ENCODE measurements at regions of chr20 and their contacts with region 1.

Region 1: GRCh38 chr20:54649511-54649962 is 174.1 kb downstream of the DOK5 start:
- DNase-seq: peak; percentile 72
- H3K4me3 ChIP-seq: no peak overlapping the region
- H3K27ac ChIP-seq: no peak overlapping the region
- H3K4me1 ChIP-seq: no peaks in the 10 kb centered on the region
- H3K27me3 ChIP-seq: peaks cover 0 to 3% of the 10 kb centered on the region in 2 experiments
- CTCF ChIP-seq: peak; percentile 78 to 82
- POLR2A ChIP-seq: no peak

Region 2: GRCh38 chr20:54093423-54094267 is 555.9 kb before region 1 on chr20:
- CTCF ChIA-PET with region 1: interaction called, 18 read pairs
- POLR2A ChIA-PET with region 1: no interaction called
- dilution Hi-C with region 1: no loop called
- intact Hi-C with region 1: loop called (anchors 1 kb)
- DNase-seq: no peak
- H3K4me3 ChIP-seq: no peak overlapping the region
- H3K27ac ChIP-seq: no peak overlapping the region
- H3K4me1 ChIP-seq: no peaks in the 10 kb centered on the region
- H3K27me3 ChIP-seq: no peaks in the 10 kb centered on the region
- CTCF ChIP-seq: no peak
- POLR2A ChIP-seq: no peak

Region 3: GRCh38 chr20:54219751-54220426 is 429.6 kb before region 1 on chr20:
- CTCF ChIA-PET with region 1: interaction called, 38 read pairs
- POLR2A ChIA-PET with region 1: no interaction called
- dilution Hi-C with region 1: no loop called
- intact Hi-C with region 1: loop called (anchors 1 kb)
- DNase-seq: peak; percentile 56
- H3K4me3 ChIP-seq: no peak overlapping the region
- H3K27ac ChIP-seq: no peak overlapping the region
- H3K4me1 ChIP-seq: peaks cover 11% of the 10 kb centered on the region
- H3K27me3 ChIP-seq: no peaks in the 10 kb centered on the region
- CTCF ChIP-seq: peak; percentile 30 to 33
- POLR2A ChIP-seq: no peak

Region 4: DNA sequence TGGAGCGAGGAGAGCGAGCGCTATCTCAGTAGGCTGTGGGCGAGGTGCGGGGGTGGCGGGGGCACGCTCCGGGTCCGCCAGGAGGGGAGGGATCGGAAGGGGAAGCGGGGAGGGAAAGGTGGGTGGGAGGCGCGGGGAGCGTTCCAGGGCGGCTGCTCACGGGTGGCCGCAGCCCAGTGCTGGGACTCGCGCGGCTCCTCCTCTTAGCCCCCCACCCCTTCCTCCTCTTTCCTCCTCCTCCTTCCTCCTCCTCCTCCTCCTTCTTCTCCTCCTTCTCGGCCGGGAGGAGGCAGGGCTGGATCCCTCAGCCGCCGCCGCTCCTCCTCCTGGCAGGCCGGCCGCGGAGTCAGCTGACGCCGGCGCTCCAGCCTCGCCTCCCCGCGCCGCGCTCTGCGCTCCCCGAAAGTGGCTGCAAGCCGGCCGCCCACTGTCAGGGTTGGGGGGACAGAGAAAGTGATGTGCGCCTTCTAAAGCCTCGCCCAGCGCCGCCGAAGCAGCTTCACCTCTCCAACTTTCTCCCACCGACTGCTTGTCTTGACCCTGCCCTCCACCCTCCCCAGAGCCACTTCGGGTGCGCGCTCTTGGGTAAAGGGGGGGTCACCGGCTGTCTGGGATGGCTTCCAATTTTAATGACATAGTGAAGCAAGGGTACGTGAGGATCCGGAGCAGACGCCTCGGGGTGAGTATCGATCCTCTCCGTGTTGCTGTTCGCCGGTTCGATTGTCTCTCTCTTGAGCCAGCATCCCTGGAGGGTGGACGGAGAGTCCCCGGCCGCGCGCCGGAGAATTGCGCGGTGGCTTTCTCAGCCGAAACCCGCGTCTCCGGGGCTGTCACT is 174.0 kb before region 1 on chr20 and contains the start of gene DOK5:
- CTCF ChIA-PET with region 1: no interaction called
- POLR2A ChIA-PET with region 1: no interaction called
- dilution Hi-C with region 1: no loop called
- intact Hi-C with region 1: loop called (anchors 5 kb)
- DNase-seq: peak; percentile 29
- H3K4me3 ChIP-seq: peak within 1 kb of the TSS; percentile 51 to 75 (median 62)
- H3K27ac ChIP-seq: no peak within 1 kb of the TSS
- H3K4me1 ChIP-seq: peaks cover 9% of the 10 kb centered on the region
- H3K27me3 ChIP-seq: peaks cover 4 to 17% of the 10 kb centered on the region in 2 experiments
- CTCF ChIP-seq: no peak
- POLR2A ChIP-seq: no peak
- total RNA-seq, gene DOK5: 5.7 and 14.2 TPM in 2 replicates

Region 5: DNA sequence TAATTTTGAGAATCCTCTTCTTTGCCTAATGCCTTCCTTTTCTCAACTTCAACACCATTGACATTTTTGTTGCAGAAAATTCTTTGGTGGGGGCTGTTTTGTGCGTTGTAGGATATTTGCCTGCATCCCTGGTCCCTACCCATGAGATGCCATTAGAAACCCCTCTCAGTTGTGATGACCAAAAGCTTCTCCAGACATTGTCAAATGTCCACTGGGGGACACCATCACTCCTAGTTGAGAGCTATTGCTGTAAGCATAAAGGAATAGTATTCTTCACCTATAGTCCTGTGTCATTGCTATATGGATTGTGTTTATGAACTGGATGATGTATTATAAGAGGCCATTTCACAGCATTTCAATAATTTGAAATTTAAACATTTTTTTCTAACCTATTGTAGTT is 116.5 kb before region 1 on chr20:
- CTCF ChIA-PET with region 1: interaction called, 17 read pairs
- POLR2A ChIA-PET with region 1: no interaction called
- dilution Hi-C with region 1: no loop called
- intact Hi-C with region 1: loop called (anchors 2 kb)
- DNase-seq: no peak
- H3K4me3 ChIP-seq: no peak overlapping the region
- H3K27ac ChIP-seq: no peak overlapping the region
- H3K4me1 ChIP-seq: no peaks in the 10 kb centered on the region
- H3K27me3 ChIP-seq: no peaks in the 10 kb centered on the region
- CTCF ChIP-seq: no peak
- POLR2A ChIP-seq: no peak

Measured in endothelial cell of umbilical vein (primary cell).